Activated B cell treated with CpG ODN at 0.5 μM for 24 hours (primary cell): ENCODE measurements at regions of chr9 and their contacts with region 1.

Region 1: GRCh38 chr9:71768388-71769174 is at the start of gene CEMIP2:
- DNase-seq: peak; percentile 84
- ATAC-seq: peak; percentile 82
- H3K4me3 Mint-ChIP-seq: peak within 1 kb of the TSS; percentile 98
- H3K27ac Mint-ChIP-seq: peak within 1 kb of the TSS; percentile 93
- H3K4me1 Mint-ChIP-seq: peaks cover 52% of the 10 kb centered on the region
- H3K27me3 Mint-ChIP-seq: no peaks in the 10 kb centered on the region
- CTCF ChIP-seq: no peak
- total RNA-seq, gene CEMIP2: 21.3 and 25.5 TPM in 2 replicates

Region 2: DNA sequence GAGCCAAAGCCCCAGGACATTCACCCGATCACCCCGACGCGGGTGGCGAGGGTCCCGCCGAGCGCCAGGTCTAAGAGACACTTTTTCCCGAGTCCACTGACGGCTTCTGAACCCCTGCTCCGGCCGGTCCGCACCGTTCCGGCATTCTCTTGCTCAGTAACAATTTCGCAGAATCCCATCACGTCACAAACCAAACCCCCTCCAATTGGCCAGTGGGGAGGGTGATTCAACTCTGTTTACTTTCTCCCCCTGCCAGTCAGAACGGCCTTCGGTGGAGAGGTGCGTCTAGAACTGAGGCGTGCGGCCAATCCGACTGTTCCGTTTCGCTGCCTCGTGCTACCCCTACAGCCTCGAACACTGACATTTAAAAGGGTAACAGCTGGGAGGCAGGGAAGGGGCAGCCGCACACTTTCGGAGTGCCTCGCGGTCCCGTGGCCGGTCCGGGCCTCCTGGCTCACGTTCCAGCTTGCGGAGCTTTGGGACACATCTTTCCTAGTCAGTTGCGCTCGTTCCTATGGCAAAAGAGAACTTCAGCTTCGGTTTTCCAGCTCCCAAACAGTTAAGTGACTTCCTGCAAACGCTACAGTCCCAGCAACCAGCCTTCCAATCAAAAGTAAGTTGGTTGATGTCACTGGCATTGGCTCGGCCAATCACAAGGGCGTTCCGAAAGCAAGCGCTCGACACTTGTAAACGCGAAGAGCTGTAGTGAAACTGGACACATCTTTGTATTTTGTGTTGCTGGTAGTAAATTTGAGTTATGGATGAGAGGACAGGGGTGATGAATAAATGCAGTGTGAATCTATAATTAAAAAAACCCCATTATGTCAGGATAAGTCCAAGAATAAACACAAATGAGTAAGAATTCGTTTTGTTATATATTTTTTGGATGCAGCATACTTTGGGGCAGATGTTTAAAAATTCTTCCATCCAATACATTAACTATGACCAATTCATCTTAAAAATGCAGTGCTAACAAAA is 1354.5 kb before region 1 on chr9 and contains the start of gene KLF9:
- CTCF ChIA-PET with region 1: no interaction called
- POLR2A ChIA-PET with region 1: no interaction called
- intact Hi-C with region 1: loop called (anchors 5 kb)
- DNase-seq: peak; percentile 78
- ATAC-seq: peak; percentile 72
- H3K4me3 Mint-ChIP-seq: peak within 1 kb of the TSS; percentile 97
- H3K27ac Mint-ChIP-seq: peak within 1 kb of the TSS; percentile 100
- H3K4me1 Mint-ChIP-seq: peaks cover 52% of the 10 kb centered on the region
- H3K27me3 Mint-ChIP-seq: no peaks in the 10 kb centered on the region
- CTCF ChIP-seq: no peak
- total RNA-seq, gene KLF9: 5.2 and 6.3 TPM in 2 replicates

Region 3: DNA sequence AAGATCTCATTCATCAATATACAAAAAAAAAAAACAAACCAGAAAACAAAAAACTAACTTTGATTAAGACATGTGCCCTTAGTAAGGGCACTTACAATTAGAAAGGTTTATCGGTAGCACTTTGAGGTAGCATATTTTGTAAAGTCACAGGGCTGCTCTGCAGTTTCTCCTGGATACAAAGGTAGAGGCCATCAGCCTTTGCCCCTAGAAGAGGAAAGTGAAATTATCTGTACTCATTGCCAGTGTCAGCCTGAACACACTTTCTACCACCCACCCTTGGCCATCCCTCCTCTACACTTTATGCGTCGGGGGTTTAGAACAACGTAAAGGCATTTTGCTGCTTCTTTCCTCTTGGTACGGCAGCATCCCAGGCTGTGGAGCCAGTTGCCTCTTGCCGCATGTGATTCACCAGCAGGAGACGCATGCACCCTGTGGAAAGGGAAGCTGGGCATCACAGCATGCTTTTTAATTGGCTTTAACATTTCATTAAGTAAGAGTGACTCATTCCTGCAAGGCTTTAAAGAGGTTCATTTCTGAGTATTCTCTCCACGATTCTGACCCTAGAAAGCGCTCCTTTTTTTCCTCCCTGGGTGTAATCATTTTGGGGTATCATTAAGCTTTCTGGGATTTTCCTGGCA is 84.9 kb before region 1 on chr9:
- CTCF ChIA-PET with region 1: interaction called, 5 read pairs
- POLR2A ChIA-PET with region 1: interaction called, 4 read pairs
- intact Hi-C with region 1: loop called (anchors 2 kb)
- DNase-seq: no peak
- ATAC-seq: no peak
- H3K4me3 Mint-ChIP-seq: no peak overlapping the region
- H3K27ac Mint-ChIP-seq: peak overlapping the region; percentile 27
- H3K4me1 Mint-ChIP-seq: peaks cover 74% of the 10 kb centered on the region
- H3K27me3 Mint-ChIP-seq: no peaks in the 10 kb centered on the region
- CTCF ChIP-seq: no peak

Region 4: DNA sequence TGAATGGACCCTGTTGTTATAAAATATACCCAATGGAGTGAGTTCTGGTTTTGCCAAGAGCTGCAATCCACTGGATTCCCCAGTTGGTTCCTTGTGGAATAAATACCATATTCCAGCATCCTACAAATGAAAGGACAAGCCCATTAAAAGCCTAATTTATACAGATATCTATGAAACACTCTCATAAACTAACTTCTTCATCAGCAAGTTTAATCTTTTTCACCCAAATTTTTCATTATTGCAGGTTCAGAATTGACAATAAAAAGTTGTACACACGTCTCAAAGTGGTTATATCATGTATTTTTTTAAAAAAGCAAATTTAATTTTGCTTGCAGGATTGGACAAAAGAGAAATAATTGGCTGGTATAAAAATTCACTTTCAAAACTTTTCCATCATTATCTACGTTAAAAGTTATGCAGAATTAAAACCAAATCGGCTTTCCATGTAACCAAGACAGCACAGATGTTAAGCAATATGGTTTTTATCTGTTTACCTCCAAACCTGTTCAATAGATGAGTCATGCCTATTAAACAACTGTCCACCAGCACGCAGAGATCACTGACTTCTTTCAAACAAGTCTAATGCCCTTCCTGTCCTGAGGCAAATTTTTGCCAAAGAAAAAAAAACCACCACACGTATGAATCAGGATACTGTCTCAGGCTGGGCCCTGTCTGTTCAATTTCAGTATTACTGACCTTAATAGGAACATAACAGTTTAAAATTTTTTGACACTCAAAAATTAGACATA is 42.8 kb before region 1 on chr9:
- CTCF ChIA-PET with region 1: interaction called, 3 read pairs
- POLR2A ChIA-PET with region 1: no interaction called
- intact Hi-C with region 1: loop called (anchors 2 kb)
- DNase-seq: no peak
- ATAC-seq: no peak
- H3K4me3 Mint-ChIP-seq: no peak overlapping the region
- H3K27ac Mint-ChIP-seq: no peak overlapping the region
- H3K4me1 Mint-ChIP-seq: no peaks in the 10 kb centered on the region
- H3K27me3 Mint-ChIP-seq: no peaks in the 10 kb centered on the region
- CTCF ChIP-seq: no peak

Region 5: DNA sequence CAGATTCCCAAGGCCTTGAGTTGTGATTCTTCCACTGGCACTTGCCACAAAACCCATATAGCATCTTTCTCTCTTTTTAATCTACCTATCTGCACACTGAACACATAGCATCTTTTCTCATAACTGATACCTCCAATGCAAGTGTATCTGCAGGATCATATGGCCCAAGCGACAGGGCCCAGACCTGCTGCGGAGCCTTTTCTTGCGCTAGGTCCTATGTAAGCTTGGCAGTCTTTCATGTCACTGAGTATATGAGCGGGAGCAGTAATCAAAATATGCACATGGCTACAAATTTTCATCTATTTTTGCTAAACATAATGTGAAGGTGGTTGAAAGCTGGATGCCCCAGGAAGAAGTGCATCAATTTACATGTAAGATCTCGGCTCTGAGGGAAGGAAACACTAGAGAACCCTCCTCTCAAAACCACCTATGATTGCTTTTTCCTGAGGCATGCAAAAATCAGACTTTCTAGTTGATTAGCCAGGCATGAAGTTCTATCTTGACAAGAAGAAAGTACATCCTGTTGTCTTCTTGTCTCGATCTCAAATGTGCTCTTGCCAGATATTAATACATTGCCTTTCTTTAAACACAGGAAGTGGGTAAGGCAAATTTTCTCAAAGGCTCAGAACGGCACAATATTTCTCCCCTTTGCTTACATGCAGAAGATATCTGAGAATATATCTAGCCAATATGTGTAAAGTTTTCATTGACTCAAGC is 26.7 kb after region 1 on chr9:
- CTCF ChIA-PET with region 1: interaction called, 6 read pairs
- POLR2A ChIA-PET with region 1: interaction called, 72 read pairs
- intact Hi-C with region 1: loop called (anchors 1 kb)
- DNase-seq: no peak
- ATAC-seq: peak; percentile 84
- H3K4me3 Mint-ChIP-seq: peak overlapping the region; percentile 67
- H3K27ac Mint-ChIP-seq: peak overlapping the region; percentile 87
- H3K4me1 Mint-ChIP-seq: peaks cover 79% of the 10 kb centered on the region
- H3K27me3 Mint-ChIP-seq: no peaks in the 10 kb centered on the region
- CTCF ChIP-seq: no peak

Region 6: DNA sequence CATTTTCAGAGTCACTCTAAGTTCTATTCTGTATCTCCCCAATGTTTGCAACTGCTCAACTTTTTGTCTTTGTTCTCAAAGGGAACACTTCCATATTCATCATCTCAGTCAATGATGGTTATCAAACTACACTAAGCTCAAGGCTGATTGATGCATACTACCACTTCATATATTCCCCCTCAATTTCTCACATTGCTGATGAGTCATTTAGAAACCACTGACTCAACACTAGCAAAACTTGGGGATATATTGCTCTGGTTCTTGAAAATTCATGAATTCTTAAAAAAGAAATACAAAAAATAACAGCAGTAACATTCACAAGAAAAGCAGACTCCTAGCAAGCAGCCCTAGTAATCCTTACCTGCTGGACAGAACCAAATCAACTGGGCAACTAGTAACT is 90.2 kb after region 1 on chr9:
- CTCF ChIA-PET with region 1: no interaction called
- POLR2A ChIA-PET with region 1: no interaction called
- intact Hi-C with region 1: no loop called
- DNase-seq: no peak
- ATAC-seq: no peak
- H3K4me3 Mint-ChIP-seq: no peak overlapping the region
- H3K27ac Mint-ChIP-seq: no peak overlapping the region
- H3K4me1 Mint-ChIP-seq: peaks cover 19% of the 10 kb centered on the region
- H3K27me3 Mint-ChIP-seq: no peaks in the 10 kb centered on the region
- CTCF ChIP-seq: no peak

Region 7: GRCh38 chr9:71897577-71897976 is 129.0 kb after region 1 on chr9:
- CTCF ChIA-PET with region 1: no interaction called
- POLR2A ChIA-PET with region 1: interaction called, 4 read pairs
- intact Hi-C with region 1: loop called (anchors 5 kb)
- DNase-seq: no peak
- ATAC-seq: peak; percentile 66
- H3K4me3 Mint-ChIP-seq: no peak overlapping the region
- H3K27ac Mint-ChIP-seq: peak overlapping the region; percentile 80
- H3K4me1 Mint-ChIP-seq: peaks cover 89% of the 10 kb centered on the region
- H3K27me3 Mint-ChIP-seq: no peaks in the 10 kb centered on the region
- CTCF ChIP-seq: no peak

Region 8: DNA sequence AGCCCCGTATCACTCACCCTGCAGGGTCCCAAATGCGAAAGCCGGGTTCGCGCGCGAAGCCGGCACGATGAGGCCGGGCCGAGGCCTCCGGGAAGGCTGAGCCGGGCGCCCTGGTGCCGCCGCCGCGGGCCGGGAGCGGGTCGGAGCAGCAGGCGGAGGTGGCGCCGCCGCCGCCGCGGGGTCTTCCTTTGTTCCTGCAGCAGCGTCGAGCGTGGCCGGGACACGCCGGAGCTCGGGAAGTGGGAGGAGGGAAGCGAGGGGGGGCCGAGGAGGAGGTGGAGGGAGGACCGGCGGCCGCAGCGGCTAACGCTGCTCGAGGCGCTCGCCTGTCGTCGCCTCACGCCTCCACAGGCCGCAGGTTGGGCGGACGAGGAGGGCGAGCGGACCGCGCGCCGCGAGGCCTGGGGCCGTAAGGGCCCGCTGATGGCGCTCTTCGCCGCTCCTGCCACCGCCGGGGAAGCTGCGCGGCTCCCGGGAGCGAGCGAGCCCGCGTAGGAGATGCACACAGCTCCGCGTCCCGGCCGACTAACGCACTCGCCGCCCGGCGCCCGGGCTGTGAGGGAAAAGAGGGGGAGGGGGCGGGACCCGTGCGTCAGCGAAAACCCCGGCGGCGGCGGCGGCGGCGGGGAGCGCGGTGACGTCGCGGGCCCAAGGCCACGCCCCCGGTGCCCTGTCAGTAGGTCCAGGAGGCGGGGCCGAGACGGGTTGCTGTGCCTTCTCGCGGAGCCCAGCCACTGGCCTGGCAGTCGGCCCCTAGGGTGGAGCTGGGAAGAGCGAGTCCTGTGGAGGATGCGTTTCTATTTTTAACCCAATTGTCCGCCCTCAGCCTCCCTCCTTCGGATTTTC is 596.3 kb after region 1 on chr9 and contains the start of gene ZFAND5:
- CTCF ChIA-PET with region 1: no interaction called
- POLR2A ChIA-PET with region 1: interaction called, 10 read pairs
- intact Hi-C with region 1: loop called (anchors 2 kb)
- DNase-seq: peak; percentile 89
- ATAC-seq: peak; percentile 80
- H3K4me3 Mint-ChIP-seq: peak within 1 kb of the TSS; percentile 96
- H3K27ac Mint-ChIP-seq: peak within 1 kb of the TSS; percentile 98
- H3K4me1 Mint-ChIP-seq: peaks cover 40% of the 10 kb centered on the region
- H3K27me3 Mint-ChIP-seq: no peaks in the 10 kb centered on the region
- CTCF ChIP-seq: no peak
- total RNA-seq, gene ZFAND5: 79.2 and 79.5 TPM in 2 replicates